Common myeloid progenitor, CD34-positive (primary cell): ENCODE measurements at regions of chr3 and their contacts with region 1.

Region 1: DNA sequence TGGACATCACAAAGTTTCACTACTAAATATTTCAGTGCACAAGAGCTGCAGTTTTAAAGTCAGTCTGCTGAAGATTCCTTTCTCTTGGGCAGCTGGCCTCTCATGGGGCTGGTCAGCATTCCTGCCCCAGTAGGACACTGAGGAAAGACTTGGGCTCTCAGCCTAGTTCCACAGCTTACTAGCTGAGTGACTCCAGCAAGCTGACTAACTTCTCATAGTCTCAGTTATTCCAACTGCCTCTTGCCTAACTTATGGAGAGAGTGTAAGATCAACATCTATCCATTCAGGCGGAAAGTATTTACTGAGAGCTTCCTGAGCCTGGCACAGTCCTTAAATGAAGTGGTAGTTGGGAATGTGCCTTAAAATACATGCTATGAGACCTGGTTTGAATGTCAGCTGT is 27.0 kb downstream of the TM4SF4 start:
- DNase-seq: no peak
- H3K4me3 ChIP-seq: no peak overlapping the region
- H3K27ac ChIP-seq: no peak overlapping the region
- H3K4me1 ChIP-seq: peaks cover 0 to 6% (median 3%) of the 10 kb centered on the region in 4 experiments
- H3K27me3 ChIP-seq: no peaks in the 10 kb centered on the region

Region 2: DNA sequence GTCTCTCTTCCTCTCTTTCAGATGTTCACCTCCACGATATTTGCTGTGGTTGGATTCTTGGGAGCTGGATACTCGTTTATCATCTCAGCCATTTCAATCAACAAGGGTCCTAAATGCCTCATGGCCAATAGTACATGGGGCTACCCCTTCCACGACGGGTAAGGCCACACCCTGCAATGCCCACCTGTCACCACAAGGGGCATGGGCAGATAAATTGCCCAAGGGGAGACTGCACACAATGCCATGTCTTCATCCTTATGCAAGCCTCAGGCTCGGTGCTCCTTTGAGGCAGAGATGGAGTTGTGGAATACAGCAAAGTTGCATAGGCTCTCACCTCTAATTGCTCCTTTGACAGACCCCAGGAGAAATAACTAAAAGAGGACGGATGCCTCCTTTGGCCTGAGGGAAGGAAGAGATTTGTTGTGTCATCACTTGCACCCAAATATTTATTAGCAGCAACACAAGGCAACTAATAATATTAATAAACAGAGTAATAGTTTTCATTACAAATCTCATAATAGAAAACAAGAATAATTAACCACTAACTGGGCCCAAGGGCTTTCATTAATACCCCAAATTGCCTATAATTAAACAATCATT is 13.8 kb before region 1 on chr3:
- CTCF ChIA-PET with region 1: interaction called, 12 read pairs
- POLR2A ChIA-PET with region 1: no interaction called
- DNase-seq: peak; percentile 35 to 57 (median 53)
- H3K4me3 ChIP-seq: no peak overlapping the region
- H3K27ac ChIP-seq: no peak overlapping the region
- H3K4me1 ChIP-seq: no peaks in the 10 kb centered on the region
- H3K27me3 ChIP-seq: no peaks in the 10 kb centered on the region

Region 3: DNA sequence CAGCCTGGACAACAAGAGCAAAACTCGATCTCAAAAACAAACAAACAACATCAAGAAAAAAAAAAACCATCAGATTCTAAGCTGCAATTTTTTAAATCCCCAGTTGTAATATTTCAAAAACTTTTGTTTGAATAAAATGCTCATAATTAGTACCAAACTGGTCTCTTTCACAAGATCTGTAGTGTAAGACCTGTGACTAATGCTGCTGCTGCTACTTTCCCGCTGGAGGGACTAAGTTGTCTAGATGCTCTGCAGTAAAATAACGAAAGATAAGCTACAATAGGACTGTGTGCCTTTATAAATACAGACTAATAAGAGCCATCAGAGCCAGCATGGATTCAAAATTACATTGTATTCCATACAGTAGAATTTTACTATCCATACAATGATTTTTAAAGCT is 18.4 kb after region 1 on chr3:
- CTCF ChIA-PET with region 1: no interaction called
- POLR2A ChIA-PET with region 1: no interaction called
- DNase-seq: no peak
- H3K4me3 ChIP-seq: no peak overlapping the region
- H3K27ac ChIP-seq: no peak overlapping the region
- H3K4me1 ChIP-seq: no peaks in the 10 kb centered on the region
- H3K27me3 ChIP-seq: no peaks in the 10 kb centered on the region

Region 4: DNA sequence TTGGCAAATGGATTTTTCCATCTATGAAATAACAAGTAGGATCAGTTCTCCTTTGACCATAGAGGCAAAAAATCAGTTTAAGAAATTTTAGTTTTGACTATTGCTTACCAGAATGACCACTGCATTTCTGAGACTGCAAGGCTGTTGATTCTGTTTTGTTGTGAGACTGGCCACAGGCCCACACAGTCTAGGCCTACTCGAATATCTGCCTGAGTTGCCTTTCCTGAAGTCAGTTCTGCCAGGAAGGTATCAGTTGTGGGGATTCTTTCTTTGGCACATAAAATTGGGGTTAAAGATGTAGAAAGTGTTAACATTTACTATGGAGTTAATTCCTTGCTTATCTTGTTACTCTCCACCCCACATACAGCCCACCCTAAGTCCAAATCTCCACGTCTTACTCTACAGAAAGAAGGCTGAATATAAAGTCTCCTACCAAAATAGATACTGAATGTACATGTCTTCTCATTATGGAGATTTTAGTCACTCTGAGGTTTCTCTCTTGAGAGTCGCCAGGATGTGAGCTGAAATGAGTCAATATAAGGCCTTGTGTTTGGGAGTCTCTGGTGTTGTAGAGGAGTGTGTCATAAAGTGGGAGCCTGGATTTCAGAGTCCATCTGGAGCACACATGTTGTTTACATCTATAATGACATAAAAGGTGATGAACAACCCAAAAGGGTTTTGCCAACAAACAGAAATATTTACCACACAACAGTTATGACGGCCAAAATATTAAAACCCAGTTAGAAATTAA is 201.3 kb after region 1 on chr3:
- CTCF ChIA-PET with region 1: no interaction called
- POLR2A ChIA-PET with region 1: no interaction called
- DNase-seq: no peak
- H3K4me3 ChIP-seq: no peak overlapping the region
- H3K27ac ChIP-seq: no peak overlapping the region
- H3K4me1 ChIP-seq: no peaks in the 10 kb centered on the region
- H3K27me3 ChIP-seq: no peaks in the 10 kb centered on the region